HCT116 (cell line): ENCODE measurements at regions of chr15 and their contacts with region 1.

Region 1: DNA sequence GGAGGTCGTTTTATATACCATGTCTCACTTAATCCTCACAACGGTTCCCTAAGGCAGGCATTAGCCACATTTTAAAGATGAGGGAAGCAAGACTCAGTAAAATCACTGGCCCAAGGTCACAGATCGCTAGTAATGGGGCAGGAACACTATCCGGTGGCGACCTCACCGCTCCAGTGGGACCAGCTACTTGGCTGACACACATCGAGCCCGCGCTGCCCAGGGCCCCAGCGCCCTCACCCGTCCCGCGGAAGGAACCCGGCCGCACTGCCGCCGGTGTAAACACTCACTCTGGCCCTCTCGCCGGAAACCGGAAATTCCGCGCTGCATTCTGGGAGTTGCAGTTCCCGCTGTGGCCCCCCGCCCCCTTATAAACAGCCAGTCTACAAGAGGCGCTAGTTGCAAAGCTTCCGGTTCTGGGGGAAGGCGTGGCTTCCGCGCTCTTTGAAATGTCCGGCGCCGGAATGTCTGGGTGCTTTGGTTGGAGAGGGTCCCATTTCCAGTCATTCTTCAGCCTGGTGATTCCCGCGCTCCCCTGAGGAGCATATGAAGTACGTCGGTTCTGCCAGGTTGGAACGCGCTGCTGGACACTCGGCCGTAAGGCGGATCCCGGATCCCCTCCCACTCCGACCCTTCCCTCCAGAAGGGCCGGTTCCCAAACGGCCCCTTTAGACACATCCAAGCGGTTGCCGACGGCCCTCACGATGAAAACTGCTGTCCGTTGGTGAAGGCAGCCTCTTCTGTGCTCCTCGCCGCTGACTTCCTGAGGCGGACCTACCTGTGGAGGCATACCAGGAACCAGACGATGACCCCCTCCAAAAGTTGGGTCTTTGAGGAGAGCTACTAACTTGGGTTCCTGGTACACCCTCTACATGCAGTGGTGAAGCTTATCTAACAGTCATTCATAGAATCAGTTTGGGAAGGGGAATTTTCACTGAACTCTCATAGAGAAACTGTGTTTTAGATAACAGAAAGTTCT is at the start of gene UBL7:
- DNase-seq: peak; percentile 88
- ATAC-seq: peak; percentile 94
- H3K4me3 ChIP-seq: peak within 1 kb of the TSS; percentile 59 to 97
- H3K27ac ChIP-seq: peak within 1 kb of the TSS; percentile 81
- H3K4me1 ChIP-seq: peaks cover 7 to 21% of the 10 kb centered on the region in 2 experiments
- H3K27me3 ChIP-seq: no peaks in the 10 kb centered on the region
- CTCF ChIP-seq: peak in 2 of 3 experiments; percentile 5 to 13; a peak in 1 of 6 replicates
- POLR2A ChIP-seq: peak; percentile 94
- RAD21 ChIP-seq: peak; percentile 50
- total RNA-seq, gene UBL7: 65.3 TPM

Region 2: GRCh38 chr15:73809733-73810501 is 651.2 kb before region 1 on chr15:
- CTCF ChIA-PET with region 1: no interaction called
- POLR2A ChIA-PET with region 1: no interaction called
- RAD21 ChIA-PET with region 1: no interaction called
- intact Hi-C with region 1: no loop called
- DNase-seq: no peak
- ATAC-seq: peak; percentile 71
- H3K4me3 ChIP-seq: no peak overlapping the region
- H3K27ac ChIP-seq: no peak overlapping the region
- H3K4me1 ChIP-seq: peaks cover 3 to 10% of the 10 kb centered on the region in 2 experiments; a peak in 3 of 4 replicates
- H3K27me3 ChIP-seq: no peaks in the 10 kb centered on the region
- CTCF ChIP-seq: no peak
- POLR2A ChIP-seq: no peak
- RAD21 ChIP-seq: no peak

Region 3: GRCh38 chr15:74489518-74490338 is 28.6 kb after region 1 on chr15:
- CTCF ChIA-PET with region 1: interaction called, 7 read pairs
- POLR2A ChIA-PET with region 1: no interaction called
- RAD21 ChIA-PET with region 1: no interaction called
- intact Hi-C with region 1: loop called (anchors 2 kb)
- DNase-seq: peak; percentile 48
- ATAC-seq: peak; percentile 94
- H3K4me3 ChIP-seq: peak overlapping the region; percentile 19 to 38
- H3K27ac ChIP-seq: no peak overlapping the region
- H3K4me1 ChIP-seq: peaks cover 0 to 11% of the 10 kb centered on the region in 2 experiments; a peak in 2 of 4 replicates
- H3K27me3 ChIP-seq: no peaks in the 10 kb centered on the region
- CTCF ChIP-seq: peak; percentile 19 to 78 (median 77); a peak in 5 of 6 replicates
- POLR2A ChIP-seq: no peak
- RAD21 ChIP-seq: peak; percentile 66

Region 4: DNA sequence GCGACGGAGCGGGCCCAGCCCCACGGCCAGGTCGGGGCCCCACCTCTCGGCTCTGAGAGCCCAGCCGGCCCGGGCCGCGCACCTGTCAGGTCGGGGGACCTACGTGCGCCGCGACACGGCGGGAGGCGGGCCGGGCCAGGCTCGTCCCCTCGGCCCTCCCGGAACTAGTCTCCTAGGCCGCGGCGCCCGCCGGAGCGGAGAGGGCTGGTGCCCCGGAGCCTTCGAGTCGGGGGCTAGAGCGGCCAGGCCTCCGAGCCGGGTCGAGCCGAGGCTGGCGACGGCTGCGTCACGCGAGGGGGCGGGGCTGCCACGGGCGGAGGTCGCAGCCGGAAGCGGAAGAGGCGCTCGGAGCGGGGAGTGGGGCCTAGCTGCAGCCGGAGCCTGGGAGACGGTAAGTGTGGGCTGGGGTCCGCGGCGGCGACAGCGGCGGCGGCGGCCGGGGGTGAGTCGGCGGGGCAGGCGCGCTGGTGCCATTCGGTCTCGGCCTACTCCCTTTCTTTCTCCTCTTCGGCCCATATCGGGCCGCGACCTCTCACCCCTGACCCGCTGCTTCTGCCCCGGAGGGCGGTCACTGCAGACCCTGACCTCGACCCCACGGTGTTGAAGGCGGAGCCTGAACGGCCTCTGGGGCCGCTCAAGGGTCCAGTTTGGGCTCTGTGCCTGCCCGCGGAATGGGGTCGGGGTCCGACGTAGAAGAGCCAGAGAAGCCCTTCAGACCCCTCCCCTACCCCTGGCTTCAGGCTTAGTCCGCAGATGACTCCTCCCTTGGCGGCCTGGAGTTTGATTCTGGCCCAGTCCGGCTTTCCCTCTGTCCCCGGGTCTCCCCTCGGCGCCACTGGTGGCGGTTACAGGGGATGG is 154.6 kb after region 1 on chr15 and contains the start of gene CLK3:
- CTCF ChIA-PET with region 1: no interaction called
- POLR2A ChIA-PET with region 1: no interaction called
- RAD21 ChIA-PET with region 1: no interaction called
- intact Hi-C with region 1: loop called (anchors 1 kb)
- DNase-seq: peak; percentile 86
- ATAC-seq: peak; percentile 92
- H3K4me3 ChIP-seq: peak within 1 kb of the TSS; percentile 99
- H3K27ac ChIP-seq: peak within 1 kb of the TSS; percentile 90
- H3K4me1 ChIP-seq: peaks cover 9 to 29% of the 10 kb centered on the region in 2 experiments; a peak in 3 of 4 replicates
- H3K27me3 ChIP-seq: no peaks in the 10 kb centered on the region
- CTCF ChIP-seq: no peak
- POLR2A ChIP-seq: no peak
- RAD21 ChIP-seq: no peak
- total RNA-seq, gene CLK3: 79.3 TPM